Right ventricle myocardium inferior (tissue), 1 donor: ENCODE measurements at regions of chr18 and their contacts with region 1.

Region 1: GRCh38 chr18:13221869-13222855 is 3.6 kb downstream of the LDLRAD4 start:
- DNase-seq: peak; percentile 91
- ATAC-seq: peak; percentile 54

Region 2: GRCh38 chr18:12857215-12857905 is 364.8 kb before region 1 on chr18:
- intact Hi-C with region 1: no loop called
- DNase-seq: no peak
- ATAC-seq: no peak

Region 3: GRCh38 chr18:13112982-13113381 is 109.2 kb before region 1 on chr18:
- intact Hi-C with region 1: no loop called
- DNase-seq: peak; percentile 83
- ATAC-seq: peak; percentile 98

Region 4: DNA sequence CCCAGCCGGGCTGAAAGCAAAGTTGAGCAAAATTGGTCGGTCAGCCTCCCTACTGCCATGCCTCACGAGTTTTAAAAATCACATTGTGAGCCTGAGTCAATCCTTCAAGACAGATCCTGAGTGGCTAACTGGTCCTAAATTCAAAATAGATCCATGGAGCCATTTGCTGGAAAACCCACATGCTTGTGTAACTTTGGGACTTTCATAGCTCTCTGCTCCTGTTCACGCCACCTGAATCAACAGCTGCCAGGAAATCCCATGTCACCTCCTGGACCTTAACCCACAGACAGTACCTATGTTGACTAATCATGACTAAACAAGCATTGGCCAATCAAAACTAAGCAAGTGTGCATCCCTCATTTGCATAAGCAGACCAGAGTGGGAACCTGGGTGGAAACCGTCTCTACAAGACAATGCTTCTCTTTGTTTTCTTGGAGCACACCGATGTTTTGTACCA is 46.4 kb before region 1 on chr18:
- intact Hi-C with region 1: no loop called
- DNase-seq: no peak
- ATAC-seq: no peak

Region 5: GRCh38 chr18:13268158-13269012 is 46.2 kb after region 1 on chr18:
- intact Hi-C with region 1: loop called (anchors 2 kb)
- DNase-seq: no peak
- ATAC-seq: no peak

Region 6: DNA sequence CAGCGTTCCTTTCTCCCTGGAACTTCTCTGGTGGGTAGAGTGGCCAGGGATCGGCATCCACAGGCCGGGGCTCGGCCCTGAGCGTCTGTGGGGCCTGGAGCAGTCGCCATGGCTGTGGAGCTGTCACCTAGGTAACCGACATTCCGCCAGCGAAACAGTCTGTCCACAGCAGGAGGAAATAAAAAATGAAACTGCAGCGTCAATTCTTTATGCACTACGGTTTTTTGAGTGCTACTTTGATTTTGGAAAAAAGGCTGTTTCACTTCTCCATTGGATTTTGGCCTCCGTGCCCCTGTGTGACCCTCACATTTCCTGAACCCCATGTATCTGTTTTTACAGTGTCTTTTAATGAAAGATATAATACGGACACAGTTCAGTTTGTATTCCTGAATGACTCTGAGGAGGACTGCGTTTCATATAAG is 159.8 kb after region 1 on chr18:
- intact Hi-C with region 1: loop called (anchors 2 kb)
- DNase-seq: peak; percentile 85
- ATAC-seq: peak; percentile 87

Region 7: GRCh38 chr18:13416208-13416607 is 194.0 kb after region 1 on chr18:
- intact Hi-C with region 1: loop called (anchors 5 kb)
- DNase-seq: no peak
- ATAC-seq: no peak

Region 8: DNA sequence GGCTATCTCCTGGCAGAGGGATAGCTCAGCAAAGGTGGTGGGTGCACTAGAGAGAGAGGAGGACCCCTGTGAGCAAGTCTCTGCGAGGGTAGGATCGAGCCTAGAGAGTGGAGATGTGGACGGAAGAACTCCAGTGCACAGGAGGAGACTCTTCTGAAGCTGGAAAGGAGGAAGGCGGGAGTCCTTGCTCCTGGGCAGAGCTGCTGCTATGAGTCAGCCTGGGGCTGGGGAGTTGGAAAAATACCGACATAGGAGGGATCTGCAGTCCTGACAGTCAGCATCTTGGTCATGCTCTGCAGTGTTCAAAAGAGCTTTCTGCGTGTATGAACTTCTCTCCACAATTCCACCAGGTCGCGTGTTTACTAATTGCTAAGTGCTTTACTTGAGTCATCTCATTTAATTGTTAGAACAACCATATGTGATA is 230.2 kb after region 1 on chr18:
- intact Hi-C with region 1: loop called (anchors 5 kb)
- DNase-seq: no peak
- ATAC-seq: peak; percentile 30

Region 9: DNA sequence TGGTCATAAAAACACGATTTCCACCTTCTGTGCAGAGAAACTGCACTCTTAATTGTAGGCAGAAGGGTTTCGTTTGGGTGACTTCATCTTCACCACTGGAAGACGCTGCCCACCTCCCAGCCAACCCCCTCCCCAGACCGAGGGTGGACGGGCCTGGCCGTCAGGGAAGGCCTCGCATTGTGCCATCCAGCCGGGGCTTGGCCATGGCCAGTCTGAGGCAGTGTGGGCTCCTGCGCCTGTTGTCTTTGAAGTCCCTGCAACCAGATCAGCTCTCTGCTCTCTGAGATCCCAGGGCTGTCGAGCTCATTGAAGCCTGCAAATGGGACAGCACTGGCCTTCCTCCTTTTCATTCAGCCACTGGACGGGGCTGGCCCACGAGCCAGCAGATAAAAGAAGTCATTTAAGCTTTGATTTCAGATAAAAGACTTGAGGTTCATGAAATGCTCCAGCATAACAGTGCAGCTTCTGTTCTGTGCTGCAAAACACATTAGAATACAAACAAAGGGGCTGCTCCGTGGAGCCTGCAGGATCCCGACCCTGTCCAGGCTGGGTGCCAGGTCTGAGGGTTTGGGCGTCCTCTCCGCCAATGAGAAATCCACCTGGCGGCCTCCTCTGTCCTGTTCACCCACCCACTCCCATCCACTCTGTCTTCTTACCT is 249.9 kb after region 1 on chr18:
- intact Hi-C with region 1: loop called (anchors 5 kb)
- DNase-seq: no peak
- ATAC-seq: no peak